ENCODE measurements at regions of chr20 and their contacts with region 1.

Region 1: GRCh38 chr20:62900052-62900691 is 26.1 kb downstream of the DIDO1 start:
- DNase-seq: peak; percentile 43
- H3K4me3 ChIP-seq: no peak overlapping the region
- H3K27ac ChIP-seq: peak overlapping the region; percentile 15
- H3K4me1 ChIP-seq: peaks cover 39% of the 10 kb centered on the region
- H3K27me3 ChIP-seq: no peaks in the 10 kb centered on the region
- CTCF ChIP-seq: peak; percentile 84 to 85

Region 2: GRCh38 chr20:62740286-62741141 is 159.7 kb before region 1 on chr20:
- CTCF ChIA-PET with region 1: no interaction called
- dilution Hi-C with region 1: no loop called
- in situ Hi-C with region 1: no loop called
- intact Hi-C with region 1: no loop called
- DNase-seq: peak; percentile 91
- H3K4me3 ChIP-seq: no peak overlapping the region
- H3K27ac ChIP-seq: no peak overlapping the region
- H3K4me1 ChIP-seq: peaks cover 45% of the 10 kb centered on the region
- H3K27me3 ChIP-seq: no peaks in the 10 kb centered on the region
- CTCF ChIP-seq: no peak

Region 3: DNA sequence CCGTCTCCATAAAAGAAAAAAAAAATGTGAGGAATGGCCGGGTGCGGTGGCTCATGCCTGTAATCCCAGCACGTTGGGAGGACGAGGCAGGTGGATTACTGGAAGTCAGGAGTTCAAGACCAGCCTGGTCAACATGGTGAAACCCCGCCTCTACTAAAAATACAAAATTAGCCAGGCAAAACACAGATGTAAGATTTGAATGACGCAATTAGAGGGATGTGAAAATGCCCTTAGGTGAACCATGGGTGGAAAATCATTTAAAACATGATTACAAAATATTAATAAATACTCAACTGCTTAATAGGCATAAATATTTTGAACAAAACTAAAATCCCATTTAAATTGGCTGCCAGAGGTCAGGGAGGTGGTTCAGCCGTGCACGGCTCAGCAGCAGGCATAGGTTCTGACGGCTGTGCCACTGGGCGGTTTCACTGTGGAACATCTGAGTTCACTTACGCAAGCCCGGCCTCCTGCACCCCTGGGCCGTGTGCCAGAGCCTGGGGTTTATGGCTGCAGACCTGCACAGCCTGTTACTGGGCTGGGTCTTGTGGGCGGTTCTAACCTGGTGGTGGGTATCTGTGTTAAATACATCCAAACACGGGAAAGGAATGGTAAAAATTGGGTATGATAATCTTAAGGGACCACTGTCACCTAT is 62.2 kb before region 1 on chr20:
- CTCF ChIA-PET with region 1: no interaction called
- dilution Hi-C with region 1: no loop called
- in situ Hi-C with region 1: no loop called
- intact Hi-C with region 1: no loop called
- DNase-seq: no peak
- H3K4me3 ChIP-seq: no peak overlapping the region
- H3K27ac ChIP-seq: no peak overlapping the region
- H3K4me1 ChIP-seq: no peaks in the 10 kb centered on the region
- H3K27me3 ChIP-seq: no peaks in the 10 kb centered on the region
- CTCF ChIP-seq: no peak

Region 4: DNA sequence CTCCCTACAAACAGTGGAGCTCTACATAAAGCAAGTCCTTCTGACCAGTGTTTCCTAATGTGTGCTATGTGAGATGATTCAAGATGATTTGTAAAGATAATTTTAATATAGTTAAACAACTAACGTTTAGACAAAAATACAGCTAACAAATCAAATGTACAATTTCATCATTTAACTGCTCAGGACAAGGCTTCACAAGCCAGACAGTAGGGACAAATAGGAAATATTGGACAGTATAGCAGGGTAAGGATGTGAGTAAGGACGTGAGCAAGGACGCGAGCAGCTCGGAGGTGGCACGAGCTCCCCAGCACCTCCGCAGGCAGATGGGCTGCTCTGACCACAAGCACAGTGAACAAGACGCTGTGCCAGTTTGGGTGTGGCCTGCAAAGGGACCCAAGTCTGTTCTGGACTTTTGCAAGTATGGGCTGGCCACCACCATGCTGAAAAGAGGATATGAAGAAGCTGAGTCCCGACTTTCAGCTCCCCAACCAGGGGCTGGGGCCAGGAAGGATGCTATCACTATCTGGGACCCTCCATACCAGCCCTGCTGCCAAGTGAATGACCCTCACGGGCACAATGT is 11.6 kb after region 1 on chr20:
- CTCF ChIA-PET with region 1: no interaction called
- dilution Hi-C with region 1: no loop called
- in situ Hi-C with region 1: no loop called
- intact Hi-C with region 1: loop called (anchors 1 kb)
- DNase-seq: peak; percentile 75
- H3K4me3 ChIP-seq: no peak overlapping the region
- H3K27ac ChIP-seq: peak overlapping the region; percentile 9
- H3K4me1 ChIP-seq: peaks cover 26% of the 10 kb centered on the region
- H3K27me3 ChIP-seq: no peaks in the 10 kb centered on the region
- CTCF ChIP-seq: no peak

Region 5: DNA sequence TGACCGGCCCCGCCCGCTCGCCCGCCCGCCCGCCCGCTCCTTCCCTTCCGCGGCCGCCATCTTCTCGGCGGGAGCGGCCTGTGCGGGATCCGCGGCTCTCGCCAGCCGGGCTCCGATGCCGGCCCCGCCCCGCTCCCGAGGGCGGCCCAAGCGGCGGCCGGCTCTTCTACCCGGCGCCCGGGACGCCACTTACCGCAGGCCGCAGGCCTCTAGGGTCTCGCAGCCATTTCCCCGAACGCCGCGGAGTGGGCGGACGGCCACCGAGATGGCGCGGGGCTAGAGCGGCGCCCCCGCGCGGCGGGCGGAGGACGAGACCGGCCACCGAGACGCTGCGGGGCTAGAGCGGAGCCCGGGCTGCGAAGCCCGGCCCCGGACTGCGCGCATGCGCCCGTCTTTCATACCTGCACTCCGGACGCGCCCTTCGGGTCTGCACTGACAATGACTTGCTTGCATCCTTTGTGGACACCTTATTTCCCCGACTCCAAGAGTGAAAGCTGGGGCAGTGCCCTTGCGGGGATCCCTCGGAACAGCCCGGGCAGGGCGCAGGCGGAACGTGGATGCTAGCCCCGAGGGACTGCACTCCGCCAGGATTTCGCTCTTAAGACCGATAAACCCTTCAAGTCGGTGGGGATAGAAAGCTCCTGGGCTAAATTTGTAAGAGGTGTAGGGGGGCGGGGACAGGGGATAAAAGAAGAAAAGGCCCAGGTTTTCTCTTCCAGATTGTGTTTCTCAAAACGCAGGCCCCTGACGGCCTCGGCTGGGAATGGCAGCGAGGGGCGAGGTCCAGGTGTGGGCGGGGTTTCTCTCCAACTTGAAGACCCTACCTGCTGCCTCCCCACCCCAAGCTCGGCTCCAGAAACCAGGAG is 26.3 kb after region 1 on chr20 and contains the start of gene DIDO1:
- CTCF ChIA-PET with region 1: interaction called, 25 read pairs
- dilution Hi-C with region 1: no loop called
- in situ Hi-C with region 1: no loop called
- intact Hi-C with region 1: loop called (anchors 1 kb)
- DNase-seq: peak; percentile 86
- H3K4me3 ChIP-seq: peak within 1 kb of the TSS; percentile 96 to 98 (median 97)
- H3K27ac ChIP-seq: peak within 1 kb of the TSS; percentile 97
- H3K4me1 ChIP-seq: peaks cover 58% of the 10 kb centered on the region
- H3K27me3 ChIP-seq: no peaks in the 10 kb centered on the region
- CTCF ChIP-seq: peak; percentile 14 to 61
- total RNA-seq, gene DIDO1: 38.7 to 53.2 TPM

Region 6: GRCh38 chr20:62937366-62938104 is 37.4 kb after region 1 on chr20:
- CTCF ChIA-PET with region 1: no interaction called
- dilution Hi-C with region 1: loop called (anchors 5 kb)
- in situ Hi-C with region 1: no loop called
- intact Hi-C with region 1: loop called (anchors 1 kb)
- DNase-seq: peak; percentile 93
- H3K4me3 ChIP-seq: peak overlapping the region; percentile 95 to 100 (median 97)
- H3K27ac ChIP-seq: peak overlapping the region; percentile 87
- H3K4me1 ChIP-seq: peaks cover 15% of the 10 kb centered on the region
- H3K27me3 ChIP-seq: no peaks in the 10 kb centered on the region
- CTCF ChIP-seq: no peak

Region 7: GRCh38 chr20:62972270-62973032 is 72.3 kb after region 1 on chr20:
- CTCF ChIA-PET with region 1: no interaction called
- dilution Hi-C with region 1: no loop called
- in situ Hi-C with region 1: no loop called
- intact Hi-C with region 1: loop called (anchors 1 kb)
- DNase-seq: peak; percentile 64
- H3K4me3 ChIP-seq: peak overlapping the region in 2 of 3 experiments; percentile 10 to 13
- H3K27ac ChIP-seq: no peak overlapping the region
- H3K4me1 ChIP-seq: peaks cover 12% of the 10 kb centered on the region
- H3K27me3 ChIP-seq: peaks cover 3% of the 10 kb centered on the region
- CTCF ChIP-seq: peak; percentile 87 to 94

Region 8: GRCh38 chr20:63009045-63009961 is 109.1 kb after region 1 on chr20:
- CTCF ChIA-PET with region 1: no interaction called
- dilution Hi-C with region 1: no loop called
- in situ Hi-C with region 1: loop called (anchors 10 to 25 kb)
- intact Hi-C with region 1: loop called (anchors 1 kb)
- DNase-seq: peak; percentile 55
- H3K4me3 ChIP-seq: no peak overlapping the region
- H3K27ac ChIP-seq: no peak overlapping the region
- H3K4me1 ChIP-seq: no peaks in the 10 kb centered on the region
- H3K27me3 ChIP-seq: peaks cover 55% of the 10 kb centered on the region
- CTCF ChIP-seq: peak; percentile 73 to 94

Region 9: GRCh38 chr20:63333241-63333836 is 433.2 kb after region 1 on chr20:
- CTCF ChIA-PET with region 1: no interaction called
- dilution Hi-C with region 1: no loop called
- in situ Hi-C with region 1: no loop called
- intact Hi-C with region 1: no loop called
- DNase-seq: peak; percentile 26
- H3K4me3 ChIP-seq: no peak overlapping the region
- H3K27ac ChIP-seq: no peak overlapping the region
- H3K4me1 ChIP-seq: no peaks in the 10 kb centered on the region
- H3K27me3 ChIP-seq: peaks cover 11% of the 10 kb centered on the region
- CTCF ChIP-seq: no peak